ENCODE measurements at regions of chr6 and their contacts with region 1.

Region 1: GRCh38 chr6:133837801-133838349 is 51.0 kb upstream of the TCF21 start:
- DNase-seq: peak in 1 of 2 donors; percentile 68
- H3K4me3 ChIP-seq: peak overlapping the region; percentile 50 to 68
- H3K27ac ChIP-seq: no peak overlapping the region
- H3K4me1 ChIP-seq: no peaks in the 10 kb centered on the region
- H3K27me3 ChIP-seq: no peaks in the 10 kb centered on the region
- CTCF ChIP-seq: peak; percentile 19 to 70 (median 65)

Region 2: DNA sequence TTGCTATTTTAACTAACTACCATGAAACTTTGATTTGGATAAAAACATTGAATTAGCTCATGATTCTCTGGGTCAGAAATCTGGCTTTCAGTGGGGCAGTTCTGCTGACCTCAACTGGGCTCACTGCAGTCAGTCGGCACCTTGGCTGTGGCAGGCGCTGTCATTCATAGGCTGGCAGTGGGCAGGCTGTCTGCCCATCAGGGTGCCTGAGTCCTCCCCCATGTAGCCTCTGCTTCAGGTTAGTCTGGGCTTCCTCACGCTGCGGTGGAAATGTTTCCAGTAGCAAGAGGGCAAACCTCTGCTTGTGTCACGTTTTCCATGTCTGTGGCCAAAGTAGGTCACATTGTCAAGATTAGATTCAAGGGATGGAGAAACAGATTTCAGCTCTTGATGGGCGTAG is 200.0 kb before region 1 on chr6:
- intact Hi-C with region 1: loop called (anchors 5 kb)
- DNase-seq: peak in 1 of 2 donors; percentile 66
- H3K4me3 ChIP-seq: no peak overlapping the region
- H3K27ac ChIP-seq: peak overlapping the region; percentile 44 to 50
- H3K4me1 ChIP-seq: peaks cover 0 to 5% of the 10 kb centered on the region in 2 donors
- H3K27me3 ChIP-seq: no peaks in the 10 kb centered on the region
- CTCF ChIP-seq: no peak

Measured in ascending aorta (tissue), 2 donors.